Calu3 (cell line): ENCODE measurements at regions of chr1 and their contacts with region 1.

Region 1: DNA sequence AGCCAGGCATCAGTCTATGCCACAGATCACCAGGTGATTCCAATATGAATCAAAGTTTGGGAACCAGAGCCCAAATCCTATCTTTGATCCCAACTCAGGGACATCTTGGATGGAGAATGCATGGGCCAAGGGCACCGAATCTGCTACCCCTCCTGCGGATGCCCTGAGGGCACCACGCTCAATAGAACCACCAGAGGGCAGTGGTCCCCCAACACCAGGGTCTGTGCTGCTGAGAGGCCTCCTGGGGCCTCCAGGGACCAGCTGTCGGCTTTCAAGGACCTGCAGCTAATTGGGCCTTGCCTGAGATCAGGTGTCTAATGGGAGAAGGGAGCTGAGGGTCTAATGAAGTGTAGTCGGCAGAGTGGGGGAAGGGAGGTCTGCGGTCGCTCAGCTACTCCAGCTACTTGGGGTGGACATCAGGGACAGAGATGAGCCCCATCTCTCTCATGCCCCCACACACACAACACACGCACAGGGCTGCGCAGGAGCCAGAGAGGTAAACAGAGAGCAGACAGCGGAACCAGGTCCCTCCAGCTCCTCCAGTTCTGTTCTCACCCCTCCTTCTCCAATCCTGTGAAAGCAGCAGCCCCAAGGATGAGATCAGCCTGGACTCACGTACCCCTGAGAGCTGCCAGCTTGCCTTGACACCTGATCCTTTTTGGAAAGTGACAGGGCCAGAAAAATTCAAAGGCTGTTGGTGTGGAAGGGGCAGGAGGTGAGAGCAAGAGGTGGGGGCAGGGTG is 34.9 kb upstream of the PPP1R15B start:
- DNase-seq: peak; percentile 89
- H3K4me3 Mint-ChIP-seq: no peak overlapping the region
- H3K27ac Mint-ChIP-seq: no peak overlapping the region
- H3K4me1 Mint-ChIP-seq: peaks cover 79% of the 10 kb centered on the region
- H3K27me3 Mint-ChIP-seq: no peaks in the 10 kb centered on the region
- CTCF ChIP-seq: peak; percentile 73

Region 2: GRCh38 chr1:204323887-204324286 is 122.7 kb before region 1 on chr1:
- CTCF ChIA-PET with region 1: no interaction called
- intact Hi-C with region 1: no loop called
- DNase-seq: no peak
- H3K4me3 Mint-ChIP-seq: no peak overlapping the region
- H3K27ac Mint-ChIP-seq: no peak overlapping the region
- H3K4me1 Mint-ChIP-seq: peaks cover 60% of the 10 kb centered on the region
- H3K27me3 Mint-ChIP-seq: no peaks in the 10 kb centered on the region
- CTCF ChIP-seq: no peak

Region 3: DNA sequence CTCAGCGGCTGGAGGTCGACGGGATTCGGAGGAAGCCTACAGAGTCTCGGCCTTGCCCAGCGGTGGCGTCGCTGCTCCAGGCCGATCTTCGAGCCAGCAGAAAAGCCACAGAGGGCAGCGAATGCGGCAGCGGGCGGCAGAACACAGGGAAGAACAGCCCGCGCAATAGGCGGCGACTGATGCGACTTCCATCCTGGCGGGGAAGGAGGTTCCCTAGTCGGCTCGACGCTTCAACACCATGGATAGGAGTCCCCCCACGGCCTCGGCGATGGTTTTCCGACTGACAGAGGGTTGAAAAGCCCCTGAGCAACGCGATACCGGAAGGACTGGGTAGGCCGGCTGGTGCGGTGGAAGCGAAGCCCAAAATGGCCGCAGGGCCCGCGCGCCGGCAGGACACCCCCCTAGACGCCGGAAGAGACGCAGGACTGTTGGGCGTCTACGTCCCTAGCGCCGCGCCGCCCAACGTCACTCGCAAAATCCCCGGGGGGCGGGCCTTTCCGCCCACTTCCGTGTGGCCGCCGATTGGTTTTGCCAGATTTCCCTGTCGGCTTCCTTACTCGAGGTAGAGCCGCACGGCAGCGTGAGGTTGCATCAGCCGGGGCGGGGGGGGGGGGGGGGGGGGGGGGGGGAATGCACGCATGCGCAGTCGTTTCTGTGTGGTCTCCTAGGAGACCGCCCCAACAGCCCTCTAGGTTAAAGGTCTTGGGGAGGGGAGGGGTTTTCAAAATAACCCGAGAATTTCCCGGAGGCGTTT is 34.9 kb before region 1 on chr1 and contains the start of gene PPP1R15B:
- CTCF ChIA-PET with region 1: no interaction called
- intact Hi-C with region 1: no loop called
- DNase-seq: peak; percentile 99
- H3K4me3 Mint-ChIP-seq: peak within 1 kb of the TSS; percentile 96
- H3K27ac Mint-ChIP-seq: peak within 1 kb of the TSS; percentile 97
- H3K4me1 Mint-ChIP-seq: peaks cover 24% of the 10 kb centered on the region
- H3K27me3 Mint-ChIP-seq: no peaks in the 10 kb centered on the region
- CTCF ChIP-seq: no peak
- total RNA-seq, gene PPP1R15B: 65.2 and 68.8 TPM in 2 replicates

Region 4: DNA sequence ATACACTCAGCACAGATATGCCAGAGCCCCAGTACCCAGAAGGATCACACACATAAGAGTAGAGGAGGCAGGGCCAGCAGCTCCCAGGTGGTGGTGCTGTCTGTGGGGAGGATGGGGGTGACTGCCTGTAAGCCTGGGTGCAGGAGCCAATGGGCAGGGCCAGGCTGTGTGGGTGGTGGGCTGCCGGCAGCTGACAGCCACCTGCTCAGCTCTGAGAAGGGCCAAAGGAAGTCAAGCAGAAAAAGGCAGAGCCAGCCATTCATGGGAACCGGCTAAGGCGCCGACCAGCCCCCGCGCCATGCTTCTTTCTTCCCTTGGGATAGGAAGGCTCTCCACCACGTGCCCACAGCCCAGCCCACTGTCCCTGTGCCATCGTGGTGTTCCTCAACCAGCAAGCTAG is 34.0 kb after region 1 on chr1:
- CTCF ChIA-PET with region 1: interaction called, 10 read pairs
- intact Hi-C with region 1: no loop called
- DNase-seq: no peak
- H3K4me3 Mint-ChIP-seq: no peak overlapping the region
- H3K27ac Mint-ChIP-seq: no peak overlapping the region
- H3K4me1 Mint-ChIP-seq: peaks cover 51% of the 10 kb centered on the region
- H3K27me3 Mint-ChIP-seq: no peaks in the 10 kb centered on the region
- CTCF ChIP-seq: no peak

Region 5: GRCh38 chr1:204506961-204507387 is 60.4 kb after region 1 on chr1:
- CTCF ChIA-PET with region 1: interaction called, 30 read pairs
- intact Hi-C with region 1: loop called (anchors 2 kb)
- DNase-seq: peak; percentile 92
- H3K4me3 Mint-ChIP-seq: peak overlapping the region; percentile 71
- H3K27ac Mint-ChIP-seq: peak overlapping the region; percentile 100
- H3K4me1 Mint-ChIP-seq: peaks cover 45% of the 10 kb centered on the region
- H3K27me3 Mint-ChIP-seq: peaks cover 14% of the 10 kb centered on the region
- CTCF ChIP-seq: no peak